GM10248 (cell line): ENCODE measurements at regions of chr21 and their contacts with region 1.

Region 1: GRCh38 chr21:25607151-25608043 is at the start of gene MRPL39:
- DNase-seq: peak; percentile 95
- CTCF ChIP-seq: peak; percentile 79

Region 2: DNA sequence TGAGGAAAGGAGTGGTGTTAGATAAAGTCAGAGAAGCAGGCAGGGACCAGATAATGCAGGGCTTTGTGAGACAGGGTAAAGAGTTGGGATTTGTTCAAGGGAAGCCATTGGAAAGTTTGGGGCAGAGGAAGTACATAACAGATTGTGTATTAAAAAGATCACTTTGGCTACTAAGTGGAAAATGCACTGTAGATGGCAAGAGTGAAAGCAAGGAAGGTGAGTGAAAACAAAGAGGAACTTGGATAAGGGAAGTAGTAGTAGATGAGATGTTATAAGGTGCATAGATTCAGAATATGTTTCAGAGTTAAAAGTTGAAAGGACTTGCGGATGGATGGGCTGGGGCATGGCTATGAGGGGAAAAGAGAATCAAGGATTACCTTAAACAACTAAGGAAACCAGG is 17.5 kb before region 1 on chr21:
- CTCF ChIA-PET with region 1: interaction called, 13 read pairs
- POLR2A ChIA-PET with region 1: no interaction called
- DNase-seq: no peak
- CTCF ChIP-seq: no peak

Region 3: GRCh38 chr21:25639551-25640201 is 32.3 kb after region 1 on chr21:
- CTCF ChIA-PET with region 1: interaction called, 53 read pairs
- POLR2A ChIA-PET with region 1: interaction called, 3 read pairs
- DNase-seq: peak; percentile 83
- CTCF ChIP-seq: peak; percentile 52

Region 4: GRCh38 chr21:25700741-25701140 is 93.3 kb after region 1 on chr21:
- CTCF ChIA-PET with region 1: interaction called, 16 read pairs
- POLR2A ChIA-PET with region 1: interaction called, 4 read pairs
- DNase-seq: no peak
- CTCF ChIP-seq: no peak

Region 5: DNA sequence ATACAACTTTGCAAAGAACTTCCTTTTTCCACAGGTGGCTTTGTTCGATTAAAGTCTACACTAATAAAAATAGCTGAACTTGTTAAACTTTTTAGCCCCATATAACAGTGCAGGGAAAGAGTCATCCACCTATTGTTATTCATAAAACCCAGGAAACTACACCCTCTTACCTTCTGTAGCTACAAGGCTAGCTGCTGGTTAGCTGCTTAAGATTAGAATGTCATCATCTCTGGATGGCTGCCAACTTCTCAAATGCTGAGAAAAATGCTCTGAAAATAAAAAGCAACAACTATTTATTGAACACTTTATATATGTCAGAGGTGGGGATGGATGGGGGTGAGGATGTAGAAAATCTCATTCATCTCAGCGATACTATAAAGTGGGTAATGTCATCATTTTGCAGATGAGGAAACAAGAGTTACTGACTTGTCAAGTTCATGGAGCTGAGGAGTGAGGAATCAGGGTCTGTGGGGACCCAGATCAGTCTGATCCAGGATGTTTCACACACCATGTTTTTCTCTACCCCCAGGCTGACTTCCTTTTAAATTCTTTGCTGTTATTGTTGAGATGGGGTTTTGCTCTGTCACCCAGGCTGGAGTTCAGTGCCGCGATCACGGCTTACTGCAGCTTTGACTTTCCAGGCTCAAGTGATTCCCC is 110.2 kb after region 1 on chr21:
- CTCF ChIA-PET with region 1: interaction called, 24 read pairs
- POLR2A ChIA-PET with region 1: no interaction called
- DNase-seq: no peak
- CTCF ChIP-seq: no peak

Region 6: GRCh38 chr21:25759573-25759972 is 152.2 kb after region 1 on chr21:
- CTCF ChIA-PET with region 1: interaction called, 11 read pairs
- POLR2A ChIA-PET with region 1: no interaction called
- DNase-seq: no peak
- CTCF ChIP-seq: no peak

Region 7: GRCh38 chr21:26715878-26716506 is 1108.6 kb after region 1 on chr21:
- CTCF ChIA-PET with region 1: interaction called, 11 read pairs
- POLR2A ChIA-PET with region 1: no interaction called
- DNase-seq: peak; percentile 20
- CTCF ChIP-seq: peak; percentile 70